Mammary epithelial cell (primary cell): ENCODE measurements at regions of chr5 and their contacts with region 1.

Region 1: GRCh38 chr5:157858527-157859226 is at the start of gene CLINT1:
- DNase-seq: peak; percentile 84
- H3K4me3 ChIP-seq: peak within 1 kb of the TSS; percentile 94 to 99 (median 97)
- H3K27ac ChIP-seq: peak within 1 kb of the TSS; percentile 82
- H3K4me1 ChIP-seq: peaks cover 7% of the 10 kb centered on the region
- H3K27me3 ChIP-seq: no peaks in the 10 kb centered on the region
- CTCF ChIP-seq: no peak
- total RNA-seq, gene CLINT1: 77.2 to 127 TPM

Region 2: DNA sequence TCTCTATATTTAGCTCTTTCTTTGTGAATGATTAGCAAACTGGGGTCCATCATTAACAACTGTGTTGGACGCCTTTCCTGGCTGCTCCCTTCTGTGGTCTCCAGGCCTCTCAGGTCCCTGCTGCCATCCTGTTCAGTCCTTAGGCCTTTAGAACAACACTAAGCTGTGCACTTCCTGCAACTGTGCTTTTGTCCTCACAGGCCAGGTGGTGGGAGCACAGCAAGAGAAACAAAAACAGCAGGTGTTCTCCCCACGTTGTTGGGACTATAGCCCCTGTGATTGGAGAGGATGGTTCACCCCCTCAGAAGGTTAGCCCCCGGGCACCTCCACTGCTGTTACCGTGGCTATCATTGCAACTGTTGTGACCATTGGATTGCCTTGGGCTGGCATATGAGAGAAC is 42.0 kb after region 1 on chr5:
- CTCF ChIA-PET with region 1: no interaction called
- dilution Hi-C with region 1: no loop called
- in situ Hi-C with region 1: no loop called
- intact Hi-C with region 1: loop called (anchors 5 kb)
- DNase-seq: no peak
- H3K4me3 ChIP-seq: no peak overlapping the region
- H3K27ac ChIP-seq: no peak overlapping the region
- H3K4me1 ChIP-seq: peaks cover 10% of the 10 kb centered on the region
- H3K27me3 ChIP-seq: no peaks in the 10 kb centered on the region
- CTCF ChIP-seq: no peak

Region 3: GRCh38 chr5:157948738-157949410 is 90.2 kb after region 1 on chr5:
- CTCF ChIA-PET with region 1: no interaction called
- dilution Hi-C with region 1: no loop called
- in situ Hi-C with region 1: no loop called
- intact Hi-C with region 1: loop called (anchors 1 kb)
- DNase-seq: peak; percentile 89
- H3K4me3 ChIP-seq: no peak overlapping the region
- H3K27ac ChIP-seq: no peak overlapping the region
- H3K4me1 ChIP-seq: no peaks in the 10 kb centered on the region
- H3K27me3 ChIP-seq: no peaks in the 10 kb centered on the region
- CTCF ChIP-seq: peak; percentile 82 to 93

Region 4: GRCh38 chr5:158054223-158055110 is 195.8 kb after region 1 on chr5:
- CTCF ChIA-PET with region 1: no interaction called
- dilution Hi-C with region 1: no loop called
- in situ Hi-C with region 1: no loop called
- intact Hi-C with region 1: loop called (anchors 10 kb)
- DNase-seq: no peak
- H3K4me3 ChIP-seq: no peak overlapping the region
- H3K27ac ChIP-seq: no peak overlapping the region
- H3K4me1 ChIP-seq: peaks cover 4% of the 10 kb centered on the region
- H3K27me3 ChIP-seq: no peaks in the 10 kb centered on the region
- CTCF ChIP-seq: no peak